GM12878 (cell line): ENCODE measurements at regions of chr1 and their contacts with region 1.

Region 1: GRCh38 chr1:192477630-192478029 is 97.9 kb upstream of the RGS1 start:
- DNase-seq: peak; percentile 17
- ATAC-seq: peak; percentile 81
- H3K4me3 ChIP-seq: no peak overlapping the region
- H3K27ac ChIP-seq: no peak overlapping the region
- H3K4me1 ChIP-seq: no peaks in the 10 kb centered on the region
- H3K27me3 ChIP-seq: no peaks in the 10 kb centered on the region
- CTCF ChIP-seq: peak; percentile 38 to 76 (median 43); a peak in 5 of 6 replicates
- EP300 ChIP-seq: no peak
- POLR2A ChIP-seq: no peak
- RAD21 ChIP-seq: peak; percentile 94

Region 2: GRCh38 chr1:192491804-192492554 is 14.3 kb after region 1 on chr1:
- CTCF ChIA-PET with region 1: interaction called, 11 read pairs
- POLR2A ChIA-PET with region 1: no interaction called
- RAD21 ChIA-PET with region 1: interaction called, 8 read pairs
- SMC1A ChIA-PET with region 1: interaction called, 8 read pairs
- in situ Hi-C with region 1: no loop called
- intact Hi-C with region 1: no loop called
- DNase-seq: no peak
- ATAC-seq: no peak
- H3K4me3 ChIP-seq: no peak overlapping the region
- H3K27ac ChIP-seq: no peak overlapping the region
- H3K4me1 ChIP-seq: no peaks in the 10 kb centered on the region
- H3K27me3 ChIP-seq: no peaks in the 10 kb centered on the region
- CTCF ChIP-seq: no peak
- EP300 ChIP-seq: no peak
- POLR2A ChIP-seq: no peak
- RAD21 ChIP-seq: no peak

Region 3: GRCh38 chr1:192550922-192551534 is 73.4 kb after region 1 on chr1:
- CTCF ChIA-PET with region 1: interaction called, 7 read pairs
- POLR2A ChIA-PET with region 1: interaction called, 3 read pairs
- RAD21 ChIA-PET with region 1: interaction called, 4 read pairs
- SMC1A ChIA-PET with region 1: interaction called, 6 read pairs
- in situ Hi-C with region 1: no loop called
- intact Hi-C with region 1: loop called (anchors 2 kb)
- DNase-seq: peak; percentile 89
- ATAC-seq: peak; percentile 56
- H3K4me3 ChIP-seq: no peak overlapping the region
- H3K27ac ChIP-seq: peak overlapping the region; percentile 88
- H3K4me1 ChIP-seq: peaks cover 48% of the 10 kb centered on the region
- H3K27me3 ChIP-seq: no peaks in the 10 kb centered on the region
- CTCF ChIP-seq: no peak
- EP300 ChIP-seq: peak; percentile 71 to 85; a peak in 2 of 4 replicates
- POLR2A ChIP-seq: 0 out of 2 replicates have a peak, but pooled peaks have one; percentile 13
- RAD21 ChIP-seq: no peak

Region 4: GRCh38 chr1:192615055-192615454 is 137.4 kb after region 1 on chr1:
- CTCF ChIA-PET with region 1: interaction called, 211 read pairs
- POLR2A ChIA-PET with region 1: interaction called, 4 read pairs
- RAD21 ChIA-PET with region 1: interaction called, 174 read pairs
- SMC1A ChIA-PET with region 1: interaction called, 255 read pairs
- in situ Hi-C with region 1: no loop called
- intact Hi-C with region 1: no loop called
- DNase-seq: no peak
- ATAC-seq: peak; percentile 74
- H3K4me3 ChIP-seq: no peak overlapping the region
- H3K27ac ChIP-seq: no peak overlapping the region
- H3K4me1 ChIP-seq: no peaks in the 10 kb centered on the region
- H3K27me3 ChIP-seq: no peaks in the 10 kb centered on the region; a peak in 2 of 4 replicates
- CTCF ChIP-seq: no peak
- EP300 ChIP-seq: no peak
- POLR2A ChIP-seq: no peak
- RAD21 ChIP-seq: no peak

Region 5: DNA sequence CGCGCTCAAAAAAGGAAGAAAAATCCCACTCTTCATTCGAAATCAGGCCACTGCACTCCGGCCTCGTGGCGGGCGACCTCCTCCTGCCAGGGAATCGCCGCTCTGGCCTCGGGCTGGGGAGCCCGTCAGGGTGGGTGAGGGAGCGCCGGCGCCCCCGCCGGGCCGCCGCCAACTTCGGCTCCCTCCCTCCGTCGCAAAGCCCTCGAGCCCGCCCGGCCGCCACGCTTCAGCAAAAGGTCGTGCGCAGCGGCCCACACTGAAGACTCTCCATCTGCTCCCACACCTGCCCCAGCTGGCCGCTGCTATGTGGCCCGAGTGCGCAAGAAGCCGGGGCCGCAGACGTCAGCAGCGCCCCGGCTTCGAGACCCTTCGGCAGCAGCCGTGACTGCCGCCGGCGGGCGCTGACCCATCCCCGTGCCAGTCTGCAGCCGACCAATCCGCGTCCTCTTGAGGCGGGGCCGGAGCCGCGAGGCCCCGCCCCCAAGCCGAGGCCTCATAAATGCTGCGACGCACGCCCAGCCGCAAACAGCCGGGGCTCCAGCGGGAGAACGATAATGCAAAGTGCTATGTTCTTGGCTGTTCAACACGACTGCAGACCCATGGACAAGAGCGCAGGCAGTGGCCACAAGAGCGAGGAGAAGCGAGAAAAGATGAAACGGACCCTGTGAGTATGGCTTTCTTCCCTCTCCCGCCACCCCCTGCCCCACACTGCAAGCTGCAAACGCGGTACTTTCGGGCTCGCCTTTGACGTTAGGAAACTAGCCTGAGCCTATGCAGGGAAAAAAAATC is 331.1 kb after region 1 on chr1 and contains the start of gene RGS2:
- CTCF ChIA-PET with region 1: interaction called, 168 read pairs
- POLR2A ChIA-PET with region 1: interaction called, 5 read pairs
- RAD21 ChIA-PET with region 1: interaction called, 61 read pairs
- SMC1A ChIA-PET with region 1: interaction called, 114 read pairs
- in situ Hi-C with region 1: loop called (anchors 5 kb)
- intact Hi-C with region 1: loop called (anchors 2 kb)
- DNase-seq: peak; percentile 36
- ATAC-seq: peak; percentile 93
- H3K4me3 ChIP-seq: peak within 1 kb of the TSS; percentile 66
- H3K27ac ChIP-seq: no peak within 1 kb of the TSS
- H3K4me1 ChIP-seq: peaks cover 11% of the 10 kb centered on the region
- H3K27me3 ChIP-seq: peaks cover 0 to 5% of the 10 kb centered on the region in 2 experiments; a peak in 3 of 4 replicates
- CTCF ChIP-seq: no peak
- EP300 ChIP-seq: no peak
- POLR2A ChIP-seq: peak; percentile 99
- RAD21 ChIP-seq: no peak
- polyA plus RNA-seq, gene RGS2: 1.9 to 2.3 TPM

Region 6: GRCh38 chr1:193031438-193031837 is 553.8 kb after region 1 on chr1:
- CTCF ChIA-PET with region 1: interaction called, 13 read pairs
- POLR2A ChIA-PET with region 1: no interaction called
- RAD21 ChIA-PET with region 1: interaction called, 11 read pairs
- SMC1A ChIA-PET with region 1: interaction called, 16 read pairs
- in situ Hi-C with region 1: no loop called
- intact Hi-C with region 1: loop called (anchors 5 kb)
- DNase-seq: no peak
- ATAC-seq: peak; percentile 84
- H3K4me3 ChIP-seq: no peak overlapping the region
- H3K27ac ChIP-seq: no peak overlapping the region
- H3K4me1 ChIP-seq: no peaks in the 10 kb centered on the region
- H3K27me3 ChIP-seq: no peaks in the 10 kb centered on the region
- CTCF ChIP-seq: peak in 2 of 3 experiments; percentile 24; a peak in 3 of 6 replicates
- EP300 ChIP-seq: no peak
- POLR2A ChIP-seq: no peak
- RAD21 ChIP-seq: 0 out of 2 replicates have a peak, but pooled peaks have one; percentile 7